ENCODE measurements at regions of chr15 and their contacts with region 1.

Region 1: GRCh38 chr15:52331490-52332240 is 36.1 kb upstream of the MYO5C start:
- DNase-seq: no peak
- ATAC-seq: peak; percentile 49 to 74
- H3K4me3 ChIP-seq: no peak overlapping the region
- H3K27ac ChIP-seq: no peak overlapping the region
- H3K4me1 ChIP-seq: no peaks in the 10 kb centered on the region
- H3K27me3 ChIP-seq: no peaks in the 10 kb centered on the region

Region 2: GRCh38 chr15:52568601-52569256 is 237.1 kb after region 1 on chr15 and contains the start of gene ARPP19:
- intact Hi-C with region 1: loop called in 1 of 4 experiments (anchors 10 kb)
- DNase-seq: peak; percentile 88 to 94 (median 94)
- ATAC-seq: peak; percentile 94 to 96
- H3K4me3 ChIP-seq: peak within 1 kb of the TSS; percentile 82
- H3K27ac ChIP-seq: peak within 1 kb of the TSS; percentile 80
- H3K4me1 ChIP-seq: peaks cover 3% of the 10 kb centered on the region
- H3K27me3 ChIP-seq: no peaks in the 10 kb centered on the region
- total RNA-seq, gene ARPP19: 146 to 179 (median 164) TPM

Region 3: GRCh38 chr15:53009093-53009492 is 677.4 kb after region 1 on chr15:
- intact Hi-C with region 1: no loop called
- DNase-seq: no peak
- ATAC-seq: no peak
- H3K4me3 ChIP-seq: no peak overlapping the region
- H3K27ac ChIP-seq: no peak overlapping the region
- H3K4me1 ChIP-seq: no peaks in the 10 kb centered on the region
- H3K27me3 ChIP-seq: no peaks in the 10 kb centered on the region

Measured in right cardiac atrium (tissue), 5 donors.